ENCODE measurements at regions of chr5 and their contacts with region 1.

Region 1: DNA sequence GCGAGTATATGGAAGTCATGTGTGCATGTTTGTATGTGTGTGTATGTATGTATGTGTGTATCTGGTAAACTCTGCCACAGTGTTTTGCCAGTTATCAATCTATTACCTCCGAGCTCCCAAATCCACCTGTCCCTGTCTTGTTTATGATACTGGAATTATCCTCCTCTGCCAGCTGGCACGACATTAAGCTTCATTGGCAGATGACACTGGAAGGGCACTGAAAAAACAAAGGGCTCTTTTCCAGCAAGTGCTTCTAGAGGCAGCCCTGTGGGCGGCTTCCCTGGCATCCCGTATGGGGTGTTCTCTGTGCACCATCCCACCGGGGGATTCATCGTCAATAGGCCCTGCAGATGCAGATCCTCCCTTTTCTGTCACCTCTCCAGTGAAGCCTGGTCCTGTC is 221.5 kb downstream of the MSX2 start:
- DNase-seq: no peak
- H3K4me3 ChIP-seq: no peak overlapping the region
- H3K27ac ChIP-seq: no peak overlapping the region
- H3K4me1 ChIP-seq: no peaks in the 10 kb centered on the region
- H3K27me3 ChIP-seq: peaks cover 0 to 16% of the 10 kb centered on the region in 2 donors
- CTCF ChIP-seq: no peak
- POLR2A ChIP-seq: no peak

Region 2: DNA sequence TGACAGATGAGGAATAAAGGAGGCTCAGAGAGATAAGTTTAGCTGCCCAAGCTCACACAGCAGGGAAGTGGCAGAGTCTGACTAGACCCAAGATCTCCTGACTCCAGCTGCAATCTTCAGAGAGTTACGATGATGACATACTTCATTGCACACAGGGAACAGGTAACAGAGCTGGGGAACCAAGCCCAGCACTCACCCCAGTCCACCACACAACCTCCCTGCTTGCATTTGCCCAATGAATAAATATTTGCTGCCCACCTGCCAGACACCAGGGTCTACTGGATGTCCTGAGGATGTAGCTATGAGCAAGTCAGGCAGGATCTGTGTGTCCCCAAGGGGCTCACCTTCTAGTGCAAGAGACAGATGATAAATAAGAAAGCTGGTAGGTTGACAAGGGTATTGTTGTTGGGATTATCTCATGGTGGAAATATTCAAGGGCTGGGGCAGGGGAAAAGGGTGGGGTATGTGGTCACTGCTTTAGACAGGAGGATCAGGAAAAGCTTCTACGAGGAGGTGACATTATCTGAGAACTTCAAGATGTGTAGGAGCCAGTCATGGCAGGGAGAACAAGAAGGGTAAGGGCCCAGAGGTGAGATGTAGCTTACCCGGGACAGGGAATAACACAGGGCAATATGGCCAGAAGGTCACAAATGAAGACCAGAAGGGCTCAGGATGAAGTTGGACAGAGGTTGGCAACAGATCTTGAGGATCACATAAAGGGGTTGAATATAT is 1086.3 kb before region 1 on chr5:
- intact Hi-C with region 1: loop called (anchors 5 kb)
- DNase-seq: no peak
- H3K4me3 ChIP-seq: no peak overlapping the region
- H3K27ac ChIP-seq: no peak overlapping the region
- H3K4me1 ChIP-seq: no peaks in the 10 kb centered on the region
- H3K27me3 ChIP-seq: no peaks in the 10 kb centered on the region
- CTCF ChIP-seq: no peak
- POLR2A ChIP-seq: no peak

Region 3: DNA sequence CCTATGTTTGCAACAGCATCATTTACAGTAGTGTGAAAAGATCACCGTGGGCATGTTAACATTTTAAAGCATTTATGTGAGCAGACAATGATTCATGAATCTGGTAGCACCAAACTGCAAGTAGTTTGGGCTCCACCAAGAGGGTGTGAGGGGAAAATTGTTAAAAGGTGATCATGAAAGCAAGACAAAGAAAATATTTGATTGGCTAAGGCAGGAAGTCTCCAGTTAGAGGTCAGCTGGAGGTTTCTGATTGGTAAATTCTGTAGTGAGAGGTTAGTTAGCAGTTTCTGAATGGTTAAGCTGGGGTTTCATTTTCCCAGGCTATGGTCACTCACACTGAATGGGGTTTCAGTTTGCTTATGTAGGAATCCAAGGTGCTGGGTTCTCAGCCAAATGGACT is 511.6 kb after region 1 on chr5:
- intact Hi-C with region 1: loop called (anchors 10 kb)
- DNase-seq: no peak
- H3K4me3 ChIP-seq: no peak overlapping the region
- H3K27ac ChIP-seq: no peak overlapping the region
- H3K4me1 ChIP-seq: no peaks in the 10 kb centered on the region
- H3K27me3 ChIP-seq: peaks cover 0 to 19% of the 10 kb centered on the region in 2 donors
- CTCF ChIP-seq: no peak
- POLR2A ChIP-seq: no peak

Region 4: GRCh38 chr5:176201811-176202210 is 1256.0 kb after region 1 on chr5:
- intact Hi-C with region 1: no loop called
- DNase-seq: no peak
- H3K4me3 ChIP-seq: no peak overlapping the region
- H3K27ac ChIP-seq: no peak overlapping the region
- H3K4me1 ChIP-seq: no peaks in the 10 kb centered on the region
- H3K27me3 ChIP-seq: peaks cover 0 to 2% of the 10 kb centered on the region in 2 donors
- CTCF ChIP-seq: no peak
- POLR2A ChIP-seq: no peak

Measured in breast epithelium (tissue), 4 donors.